K562 (cell line): ENCODE measurements at regions of chr15 and their contacts with region 1.

Region 1: DNA sequence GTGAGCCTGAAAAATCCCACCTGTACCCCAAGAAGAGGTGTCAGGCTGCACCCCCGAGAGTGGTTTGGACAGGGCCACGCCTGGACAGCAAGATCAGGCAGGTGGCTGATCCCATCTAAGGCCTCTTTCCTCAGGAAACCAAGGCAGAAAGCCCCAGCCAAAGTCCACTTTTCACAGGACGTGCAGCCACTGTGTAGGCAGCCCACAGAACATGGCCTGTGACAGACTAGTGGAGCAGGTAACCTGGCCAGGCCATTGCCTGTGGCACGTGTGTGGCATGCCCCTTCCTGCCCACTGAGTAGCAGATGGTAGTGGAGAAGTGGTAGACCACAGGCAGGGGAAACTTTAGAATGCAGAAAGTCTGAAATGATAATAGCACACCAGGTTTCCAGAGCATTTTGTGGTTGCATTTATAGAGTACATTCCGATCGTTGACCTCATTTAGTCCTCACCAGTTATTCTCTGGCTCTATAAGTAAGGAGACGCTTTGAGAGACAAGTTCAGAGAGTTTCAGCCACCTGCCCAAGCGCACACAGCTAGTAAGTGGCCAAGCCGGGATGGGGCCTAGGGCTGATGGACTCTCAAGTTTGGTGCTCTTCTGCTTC is 68.7 kb downstream of the AAGAB start:
- DNase-seq: no peak
- ATAC-seq: no peak
- H3K4me3 ChIP-seq: no peak overlapping the region
- H3K27ac ChIP-seq: no peak overlapping the region
- H3K4me1 ChIP-seq: no peaks in the 10 kb centered on the region
- H3K27me3 ChIP-seq: no peaks in the 10 kb centered on the region
- CTCF ChIP-seq: no peak
- EP300 ChIP-seq: no peak
- POLR2A ChIP-seq: no peak
- RAD21 ChIP-seq: no peak

Region 2: DNA sequence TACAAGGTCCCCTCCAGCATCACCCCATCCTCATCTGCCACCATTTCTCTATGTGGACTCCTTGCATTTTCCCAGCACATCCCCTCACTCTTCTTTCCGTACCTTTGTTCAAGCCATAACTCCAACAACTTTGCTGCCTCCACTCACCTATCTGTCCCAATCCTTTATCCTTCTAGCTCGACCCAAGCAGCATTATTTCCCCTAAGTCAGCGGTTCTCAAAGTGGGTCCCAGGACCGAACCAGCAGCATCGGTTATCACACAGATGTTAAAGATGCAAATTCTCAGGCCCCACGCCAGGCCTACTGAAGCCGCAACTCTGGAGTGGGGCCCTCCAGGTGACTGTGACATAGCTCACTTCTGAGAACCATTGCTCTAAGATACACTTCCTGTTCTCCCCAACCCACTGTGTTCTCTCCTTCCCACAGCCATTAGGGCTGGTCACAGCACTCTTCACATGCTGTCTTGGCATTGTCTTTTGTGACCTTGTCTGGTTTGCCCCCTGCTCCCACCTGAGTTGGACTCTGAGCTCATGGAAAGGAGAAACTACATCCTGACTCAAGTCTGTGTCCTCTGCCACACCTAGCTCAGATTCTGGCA is 12.5 kb after region 1 on chr15:
- CTCF ChIA-PET with region 1: no interaction called
- POLR2A ChIA-PET with region 1: interaction called, 10 read pairs
- in situ Hi-C with region 1: no loop called
- intact Hi-C with region 1: no loop called
- DNase-seq: no peak
- ATAC-seq: no peak
- H3K4me3 ChIP-seq: no peak overlapping the region
- H3K27ac ChIP-seq: no peak overlapping the region
- H3K4me1 ChIP-seq: no peaks in the 10 kb centered on the region
- H3K27me3 ChIP-seq: no peaks in the 10 kb centered on the region
- CTCF ChIP-seq: no peak
- EP300 ChIP-seq: no peak
- POLR2A ChIP-seq: peak; percentile 42; the same call in 1 of the 2 replicates
- RAD21 ChIP-seq: no peak

Region 3: DNA sequence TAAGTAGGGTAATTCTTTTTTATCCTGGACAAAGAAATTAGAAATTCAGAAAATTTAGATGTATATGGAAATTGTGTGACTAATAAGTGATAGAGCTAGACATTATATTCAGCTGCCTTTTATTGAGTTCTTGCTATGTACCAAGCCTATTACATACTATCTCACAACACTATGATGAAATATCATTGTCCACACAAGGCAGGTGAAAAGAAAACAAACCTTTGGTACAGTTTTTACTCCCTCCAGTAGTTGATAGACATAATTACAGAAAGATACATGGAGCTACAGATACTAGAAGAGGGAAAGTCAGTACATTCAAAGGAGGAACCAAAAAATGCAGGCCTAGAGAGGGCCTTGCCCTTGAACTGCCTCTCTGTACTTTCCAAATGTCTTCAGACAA is 73.7 kb after region 1 on chr15:
- CTCF ChIA-PET with region 1: no interaction called
- POLR2A ChIA-PET with region 1: no interaction called
- in situ Hi-C with region 1: no loop called
- intact Hi-C with region 1: no loop called
- DNase-seq: no peak
- ATAC-seq: no peak
- H3K4me3 ChIP-seq: no peak overlapping the region
- H3K27ac ChIP-seq: no peak overlapping the region
- H3K4me1 ChIP-seq: peaks cover 4 to 11% of the 10 kb centered on the region in 2 experiments; a peak in 4 of 5 replicates
- H3K27me3 ChIP-seq: no peaks in the 10 kb centered on the region
- CTCF ChIP-seq: no peak
- EP300 ChIP-seq: no peak
- POLR2A ChIP-seq: no peak
- RAD21 ChIP-seq: no peak